ENCODE measurements at regions of chr6 and their contacts with region 1.

Region 1: GRCh38 chr6:10694302-10695085 is at the starts of genes C6orf52 and PAK1IP1:
- DNase-seq: peak; percentile 84
- ATAC-seq: peak; percentile 94
- H3K4me3 Mint-ChIP-seq: peak within 1 kb of the TSS; percentile 99
- H3K27ac Mint-ChIP-seq: peak within 1 kb of the TSS; percentile 100
- H3K4me1 Mint-ChIP-seq: peaks cover 29% of the 10 kb centered on the region
- H3K27me3 Mint-ChIP-seq: no peaks in the 10 kb centered on the region
- CTCF ChIP-seq: no peak
- total RNA-seq, gene C6orf52: 1.0 and 1.6 TPM in 2 replicates
- total RNA-seq, gene PAK1IP1: 18.1 and 18.3 TPM in 2 replicates

Region 2: DNA sequence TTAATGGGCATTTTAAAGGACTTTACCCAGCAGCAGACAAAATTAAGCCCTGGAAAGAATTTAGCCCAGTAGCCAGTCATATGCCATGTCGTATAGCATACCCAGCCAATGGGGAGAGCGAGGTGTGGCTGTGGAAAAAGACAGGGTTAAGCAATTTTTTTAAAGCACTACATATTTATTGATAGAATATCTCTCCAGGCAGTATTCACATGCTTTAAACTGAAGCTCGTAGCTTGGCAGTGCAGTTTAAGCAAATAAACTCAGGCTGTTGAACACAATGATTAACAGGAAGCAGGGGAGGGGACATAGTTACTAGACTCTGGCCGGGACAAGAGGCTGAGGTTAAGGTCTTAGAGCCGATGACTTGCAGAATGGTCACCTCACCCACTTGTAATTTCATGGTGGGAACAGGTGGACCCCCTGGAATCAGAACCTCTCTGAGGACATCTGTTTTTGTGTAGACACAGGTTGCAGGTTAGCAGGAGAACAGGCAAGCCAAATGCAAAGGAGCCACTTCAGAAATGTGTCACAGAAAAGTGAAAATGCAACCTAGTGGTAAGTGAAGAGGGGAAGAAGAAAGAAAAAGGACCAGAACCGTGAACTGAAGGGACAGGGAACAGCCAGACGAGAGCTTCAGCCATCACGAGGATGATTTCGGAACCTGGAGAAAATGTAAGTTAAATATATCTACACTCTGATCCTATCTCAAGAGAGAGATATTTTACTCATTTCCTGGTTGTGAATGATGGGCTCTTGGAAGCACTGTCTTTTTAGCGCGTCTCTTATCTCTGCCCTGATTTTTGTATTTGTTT is 166.1 kb before region 1 on chr6:
- CTCF ChIA-PET with region 1: interaction called, 4 read pairs
- POLR2A ChIA-PET with region 1: interaction called, 38 read pairs
- intact Hi-C with region 1: loop called (anchors 1 kb)
- DNase-seq: no peak
- ATAC-seq: peak; percentile 57
- H3K4me3 Mint-ChIP-seq: peak overlapping the region; percentile 97
- H3K27ac Mint-ChIP-seq: peak overlapping the region; percentile 96
- H3K4me1 Mint-ChIP-seq: peaks cover 65% of the 10 kb centered on the region
- H3K27me3 Mint-ChIP-seq: no peaks in the 10 kb centered on the region
- CTCF ChIP-seq: no peak

Region 3: GRCh38 chr6:10633216-10633615 is 61.3 kb before region 1 on chr6:
- CTCF ChIA-PET with region 1: no interaction called
- POLR2A ChIA-PET with region 1: no interaction called
- intact Hi-C with region 1: no loop called
- DNase-seq: no peak
- ATAC-seq: peak; percentile 85
- H3K4me3 Mint-ChIP-seq: no peak overlapping the region
- H3K27ac Mint-ChIP-seq: no peak overlapping the region
- H3K4me1 Mint-ChIP-seq: peaks cover 13% of the 10 kb centered on the region
- H3K27me3 Mint-ChIP-seq: no peaks in the 10 kb centered on the region
- CTCF ChIP-seq: no peak

Region 4: GRCh38 chr6:10722820-10723566 is 28.5 kb after region 1 on chr6 and contains the start of gene TMEM14C:
- CTCF ChIA-PET with region 1: no interaction called
- POLR2A ChIA-PET with region 1: interaction called, 75 read pairs
- intact Hi-C with region 1: loop called (anchors 1 kb)
- DNase-seq: peak; percentile 78
- ATAC-seq: peak; percentile 98
- H3K4me3 Mint-ChIP-seq: peak within 1 kb of the TSS; percentile 93
- H3K27ac Mint-ChIP-seq: peak within 1 kb of the TSS; percentile 89
- H3K4me1 Mint-ChIP-seq: peaks cover 39% of the 10 kb centered on the region
- H3K27me3 Mint-ChIP-seq: no peaks in the 10 kb centered on the region
- CTCF ChIP-seq: no peak
- total RNA-seq, gene TMEM14C: 23.0 and 23.1 TPM in 2 replicates

Region 5: GRCh38 chr6:10800829-10801535 is 106.5 kb after region 1 on chr6:
- CTCF ChIA-PET with region 1: interaction called, 3 read pairs
- POLR2A ChIA-PET with region 1: no interaction called
- intact Hi-C with region 1: loop called (anchors 2 kb)
- DNase-seq: peak; percentile 37
- ATAC-seq: peak; percentile 75
- H3K4me3 Mint-ChIP-seq: no peak overlapping the region
- H3K27ac Mint-ChIP-seq: no peak overlapping the region
- H3K4me1 Mint-ChIP-seq: no peaks in the 10 kb centered on the region
- H3K27me3 Mint-ChIP-seq: no peaks in the 10 kb centered on the region
- CTCF ChIP-seq: peak; percentile 98

Region 6: DNA sequence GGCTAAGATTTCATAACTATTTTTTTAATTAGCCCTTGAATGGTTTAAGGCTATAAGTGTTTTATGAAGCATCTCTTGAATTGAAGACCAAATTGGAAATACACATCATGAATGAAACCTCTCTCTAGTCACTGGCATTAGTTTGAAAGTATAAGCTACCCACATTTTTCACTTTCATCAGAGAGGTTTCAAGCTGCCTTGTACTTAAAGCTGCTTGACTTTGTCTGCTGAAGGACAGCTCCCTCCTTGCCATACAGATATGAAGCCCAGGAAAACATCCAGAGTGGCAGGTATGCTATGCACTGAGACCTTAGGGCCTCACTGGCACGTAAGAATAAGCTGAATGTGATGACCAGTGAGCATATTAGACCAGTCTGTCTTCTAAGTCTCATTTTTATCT is 286.9 kb after region 1 on chr6:
- CTCF ChIA-PET with region 1: no interaction called
- POLR2A ChIA-PET with region 1: no interaction called
- intact Hi-C with region 1: no loop called
- DNase-seq: no peak
- ATAC-seq: no peak
- H3K4me3 Mint-ChIP-seq: no peak overlapping the region
- H3K27ac Mint-ChIP-seq: no peak overlapping the region
- H3K4me1 Mint-ChIP-seq: no peaks in the 10 kb centered on the region
- H3K27me3 Mint-ChIP-seq: peaks cover 21% of the 10 kb centered on the region
- CTCF ChIP-seq: no peak

Region 7: DNA sequence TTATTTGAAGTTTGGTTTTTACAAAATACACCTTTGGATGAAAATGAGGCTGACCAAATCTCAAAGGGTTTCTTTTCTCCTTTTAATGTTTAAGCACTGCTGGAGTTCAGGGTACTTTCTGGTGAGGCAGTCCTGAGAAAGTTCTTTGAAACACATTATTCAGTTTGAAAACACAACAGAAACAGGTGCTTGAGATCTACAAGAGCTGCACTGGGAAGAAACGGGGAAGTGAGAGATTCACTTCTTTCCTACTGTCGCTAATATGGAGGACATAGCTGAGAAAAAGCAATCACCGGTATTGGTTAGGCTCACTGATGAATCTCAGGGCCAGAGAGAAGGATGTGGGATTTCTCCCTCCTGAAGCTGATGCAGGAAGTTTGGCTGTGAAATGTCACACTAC is 820.2 kb after region 1 on chr6:
- CTCF ChIA-PET with region 1: no interaction called
- POLR2A ChIA-PET with region 1: no interaction called
- intact Hi-C with region 1: no loop called
- DNase-seq: no peak
- ATAC-seq: peak; percentile 66
- H3K4me3 Mint-ChIP-seq: peak overlapping the region; percentile 49
- H3K27ac Mint-ChIP-seq: peak overlapping the region; percentile 81
- H3K4me1 Mint-ChIP-seq: peaks cover 40% of the 10 kb centered on the region
- H3K27me3 Mint-ChIP-seq: no peaks in the 10 kb centered on the region
- CTCF ChIP-seq: no peak